Activated CD8-positive, alpha-beta memory T cell treated with anti-CD3 and anti-CD28 coated beads, Interleukin-2, amount 10 ng/mL, durations not matched to agents 7 days and 5 days (primary cell): ENCODE measurements at regions of chr3 and their contacts with region 1.

Region 1: DNA sequence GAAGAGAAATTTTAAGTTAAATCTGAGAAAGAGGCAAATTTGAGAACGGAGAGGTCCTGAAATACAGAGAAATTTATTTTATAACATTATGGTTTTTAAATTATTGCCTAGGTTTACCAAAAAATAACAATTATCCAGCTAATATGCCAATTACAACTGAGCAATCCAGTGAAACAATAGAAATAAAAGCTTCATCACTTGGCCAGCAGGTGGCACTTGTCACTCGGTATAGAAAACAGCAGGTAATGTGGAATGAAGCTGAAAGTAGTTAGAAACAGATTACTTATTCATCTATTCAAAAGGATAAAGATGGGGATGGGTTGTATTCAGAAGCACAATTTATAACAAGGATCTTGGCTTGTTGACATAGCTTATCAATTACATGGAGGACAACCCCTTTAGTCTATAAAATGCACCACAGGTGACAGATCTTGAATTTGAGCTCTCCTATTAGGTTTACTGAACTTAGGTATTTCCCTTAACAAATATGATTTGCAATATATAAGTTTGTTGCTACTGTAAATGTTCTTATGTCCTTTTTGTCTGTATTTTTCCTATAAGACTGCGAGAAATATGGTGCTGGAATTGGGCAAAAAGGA is 70.1 kb upstream of the GUCA1C start:
- DNase-seq: peak; percentile 54
- ATAC-seq: peak; percentile 53
- H3K4me3 Mint-ChIP-seq: no peak overlapping the region
- H3K27ac Mint-ChIP-seq: no peak overlapping the region
- H3K4me1 Mint-ChIP-seq: peaks cover 3% of the 10 kb centered on the region
- H3K27me3 Mint-ChIP-seq: no peaks in the 10 kb centered on the region

Region 2: GRCh38 chr3:109081746-109082510 is 58.2 kb after region 1 on chr3:
- CTCF ChIA-PET with region 1: interaction called, 55 read pairs
- DNase-seq: peak; percentile 47
- ATAC-seq: peak; percentile 64
- H3K4me3 Mint-ChIP-seq: no peak overlapping the region
- H3K27ac Mint-ChIP-seq: no peak overlapping the region
- H3K4me1 Mint-ChIP-seq: no peaks in the 10 kb centered on the region
- H3K27me3 Mint-ChIP-seq: peaks cover 54% of the 10 kb centered on the region